MCF 10A (cell line): ENCODE measurements at regions of chr7 and their contacts with region 1.

Region 1: GRCh38 chr7:106285051-106285854 is 470 bp upstream of the NAMPT start:
- DNase-seq: peak; percentile 99
- H3K4me3 Mint-ChIP-seq: peak overlapping the region; percentile 100
- H3K27ac Mint-ChIP-seq: peak overlapping the region; percentile 98
- H3K4me1 Mint-ChIP-seq: peaks cover 17% of the 10 kb centered on the region
- H3K27me3 Mint-ChIP-seq: no peaks in the 10 kb centered on the region
- CTCF ChIP-seq: no peak

Region 2: DNA sequence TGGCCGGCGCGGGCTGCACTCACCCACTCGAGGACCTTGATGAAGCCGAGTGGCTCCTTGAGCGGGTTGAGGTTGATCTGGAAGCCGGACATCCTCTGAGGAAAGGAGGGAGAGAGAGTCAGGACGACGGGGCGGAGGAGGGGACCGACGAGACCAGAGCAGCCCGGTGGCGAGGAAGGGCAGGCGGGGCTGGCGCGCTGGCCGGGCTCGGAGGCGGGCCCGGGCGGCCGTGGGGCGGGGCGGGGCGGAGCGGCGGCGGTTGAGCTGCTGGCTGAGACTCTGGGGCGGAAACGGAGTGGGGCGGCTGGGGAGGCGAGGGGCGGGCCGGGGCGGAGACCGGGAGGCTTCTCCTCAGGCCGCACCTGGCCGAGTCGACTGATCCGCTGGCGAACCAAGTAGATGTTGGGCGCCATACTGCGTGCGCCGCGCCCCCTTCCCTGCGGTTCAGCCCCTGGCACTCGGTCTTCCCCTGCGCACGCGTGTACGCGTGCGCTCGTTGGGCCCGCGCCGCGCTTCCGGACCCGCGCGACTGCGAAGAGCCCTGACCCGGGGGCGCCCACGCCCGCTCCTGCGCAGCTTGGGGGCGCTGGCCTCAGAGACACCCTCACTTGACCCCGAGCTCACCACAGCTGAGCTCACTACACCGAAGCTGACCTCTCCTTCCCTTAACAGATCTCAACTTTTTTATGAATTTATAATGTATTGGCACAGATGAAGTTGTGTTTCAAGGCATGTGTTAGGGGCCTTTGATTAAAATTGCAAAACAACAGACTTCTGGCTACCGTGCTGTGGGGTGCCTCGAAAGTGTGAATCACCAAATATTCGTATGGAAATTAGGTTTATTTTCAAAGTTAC is 172.9 kb before region 1 on chr7 and contains the start of gene SYPL1:
- CTCF ChIA-PET with region 1: no interaction called
- POLR2A ChIA-PET with region 1: interaction called, 15 read pairs
- intact Hi-C with region 1: no loop called
- DNase-seq: peak; percentile 92
- H3K4me3 Mint-ChIP-seq: peak within 1 kb of the TSS; percentile 88
- H3K27ac Mint-ChIP-seq: peak within 1 kb of the TSS; percentile 95
- H3K4me1 Mint-ChIP-seq: peaks cover 23% of the 10 kb centered on the region
- H3K27me3 Mint-ChIP-seq: no peaks in the 10 kb centered on the region
- CTCF ChIP-seq: no peak
- total RNA-seq, gene SYPL1: 77.6 and 92.1 TPM in 2 replicates

Region 3: DNA sequence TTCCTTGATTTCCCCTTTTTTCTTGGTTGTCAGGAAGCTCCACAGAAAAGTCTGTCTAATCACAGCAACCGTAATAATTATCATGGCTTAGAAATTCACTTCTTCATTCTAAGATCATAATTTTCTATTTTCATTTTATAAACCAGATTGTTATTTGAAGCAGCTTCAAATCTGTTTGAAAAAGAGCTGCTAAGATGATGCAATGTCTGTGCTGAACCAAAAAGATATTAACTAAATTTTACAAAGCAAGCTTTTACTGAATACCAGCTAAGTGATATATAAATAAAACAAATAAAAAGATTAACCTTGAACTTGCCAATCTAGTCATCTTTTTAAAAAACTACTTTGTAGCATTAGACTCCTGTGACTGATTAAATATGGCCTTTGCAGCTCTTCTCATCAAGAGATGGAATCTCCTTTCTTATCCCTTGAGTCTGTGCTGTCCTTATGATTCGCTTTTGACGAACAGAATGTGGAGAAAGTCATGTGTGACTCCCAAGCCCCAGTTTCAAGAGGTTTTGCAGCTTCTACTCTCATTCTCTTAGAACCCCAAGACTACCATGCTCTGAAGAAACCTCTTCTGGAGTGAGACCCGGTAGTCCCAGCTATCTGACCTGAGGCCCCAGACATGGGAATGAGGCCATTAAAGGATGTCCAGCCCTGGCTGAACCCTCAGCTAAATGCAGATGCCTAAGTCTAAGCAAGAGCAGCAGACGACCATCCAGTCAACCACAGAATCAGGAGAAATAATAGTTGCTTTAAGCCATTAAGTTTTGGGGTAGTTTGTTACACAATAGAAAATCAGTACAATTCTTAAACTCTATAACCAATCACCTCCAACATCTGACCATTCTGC is 14.9 kb before region 1 on chr7:
- CTCF ChIA-PET with region 1: interaction called, 3 read pairs
- POLR2A ChIA-PET with region 1: interaction called, 20 read pairs
- intact Hi-C with region 1: no loop called
- DNase-seq: no peak
- H3K4me3 Mint-ChIP-seq: no peak overlapping the region
- H3K27ac Mint-ChIP-seq: peak overlapping the region; percentile 74
- H3K4me1 Mint-ChIP-seq: peaks cover 12% of the 10 kb centered on the region
- H3K27me3 Mint-ChIP-seq: no peaks in the 10 kb centered on the region
- CTCF ChIP-seq: no peak

Region 4: DNA sequence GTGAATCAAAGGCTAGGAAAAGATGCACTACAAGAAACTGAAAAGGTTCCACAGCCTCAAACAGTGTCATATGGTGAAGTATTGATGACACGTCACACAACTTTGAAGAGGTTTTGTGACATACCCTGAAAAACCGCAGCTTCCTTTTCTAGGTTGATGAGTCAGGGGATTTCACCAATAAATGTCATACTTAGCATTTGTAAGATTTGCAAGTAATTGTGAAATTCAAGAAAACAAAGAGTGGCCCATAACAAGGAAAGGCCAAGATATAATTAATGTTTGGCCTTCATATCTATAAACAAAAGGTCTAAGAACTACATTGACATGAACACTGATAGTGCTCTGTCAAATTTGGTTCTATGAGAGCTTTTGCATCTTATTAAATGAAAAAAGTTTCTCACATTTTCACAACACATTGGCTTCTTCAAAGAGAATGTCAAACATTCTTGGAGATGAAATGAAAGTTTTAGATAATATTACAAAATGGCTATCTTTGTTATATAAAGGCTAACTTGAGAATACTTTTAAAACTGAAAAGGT is 61.5 kb after region 1 on chr7:
- CTCF ChIA-PET with region 1: no interaction called
- POLR2A ChIA-PET with region 1: interaction called, 31 read pairs
- intact Hi-C with region 1: loop called (anchors 2 kb)
- DNase-seq: peak; percentile 94
- H3K4me3 Mint-ChIP-seq: peak overlapping the region; percentile 6
- H3K27ac Mint-ChIP-seq: peak overlapping the region; percentile 75
- H3K4me1 Mint-ChIP-seq: peaks cover 19% of the 10 kb centered on the region
- H3K27me3 Mint-ChIP-seq: no peaks in the 10 kb centered on the region
- CTCF ChIP-seq: no peak

Region 5: DNA sequence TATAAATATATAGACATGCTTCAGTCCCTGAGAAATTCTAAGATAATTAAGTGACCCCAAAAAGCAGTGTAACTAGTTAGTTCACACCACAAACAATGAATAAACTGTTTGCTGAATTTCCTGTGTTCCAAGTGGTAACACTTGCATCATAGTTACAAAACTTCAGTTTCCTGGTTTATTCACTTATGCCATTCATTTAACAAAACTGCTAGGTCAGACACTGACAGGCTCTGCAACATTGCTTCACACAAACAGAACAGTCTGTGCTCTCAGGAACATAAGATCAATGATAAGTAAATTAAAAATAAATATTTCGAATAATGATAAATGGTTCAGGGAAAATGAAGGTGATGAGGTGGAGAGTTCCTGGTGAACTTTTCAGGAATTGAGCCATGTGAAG is 132.8 kb after region 1 on chr7:
- CTCF ChIA-PET with region 1: interaction called, 4 read pairs
- POLR2A ChIA-PET with region 1: interaction called, 94 read pairs
- intact Hi-C with region 1: loop called (anchors 2 kb)
- DNase-seq: peak; percentile 77
- H3K4me3 Mint-ChIP-seq: no peak overlapping the region
- H3K27ac Mint-ChIP-seq: peak overlapping the region; percentile 89
- H3K4me1 Mint-ChIP-seq: peaks cover 43% of the 10 kb centered on the region
- H3K27me3 Mint-ChIP-seq: no peaks in the 10 kb centered on the region
- CTCF ChIP-seq: no peak

Region 6: GRCh38 chr7:106433377-106433776 is 148.1 kb after region 1 on chr7:
- CTCF ChIA-PET with region 1: no interaction called
- POLR2A ChIA-PET with region 1: no interaction called
- intact Hi-C with region 1: no loop called
- DNase-seq: no peak
- H3K4me3 Mint-ChIP-seq: no peak overlapping the region
- H3K27ac Mint-ChIP-seq: no peak overlapping the region
- H3K4me1 Mint-ChIP-seq: no peaks in the 10 kb centered on the region
- H3K27me3 Mint-ChIP-seq: no peaks in the 10 kb centered on the region
- CTCF ChIP-seq: no peak

Region 7: DNA sequence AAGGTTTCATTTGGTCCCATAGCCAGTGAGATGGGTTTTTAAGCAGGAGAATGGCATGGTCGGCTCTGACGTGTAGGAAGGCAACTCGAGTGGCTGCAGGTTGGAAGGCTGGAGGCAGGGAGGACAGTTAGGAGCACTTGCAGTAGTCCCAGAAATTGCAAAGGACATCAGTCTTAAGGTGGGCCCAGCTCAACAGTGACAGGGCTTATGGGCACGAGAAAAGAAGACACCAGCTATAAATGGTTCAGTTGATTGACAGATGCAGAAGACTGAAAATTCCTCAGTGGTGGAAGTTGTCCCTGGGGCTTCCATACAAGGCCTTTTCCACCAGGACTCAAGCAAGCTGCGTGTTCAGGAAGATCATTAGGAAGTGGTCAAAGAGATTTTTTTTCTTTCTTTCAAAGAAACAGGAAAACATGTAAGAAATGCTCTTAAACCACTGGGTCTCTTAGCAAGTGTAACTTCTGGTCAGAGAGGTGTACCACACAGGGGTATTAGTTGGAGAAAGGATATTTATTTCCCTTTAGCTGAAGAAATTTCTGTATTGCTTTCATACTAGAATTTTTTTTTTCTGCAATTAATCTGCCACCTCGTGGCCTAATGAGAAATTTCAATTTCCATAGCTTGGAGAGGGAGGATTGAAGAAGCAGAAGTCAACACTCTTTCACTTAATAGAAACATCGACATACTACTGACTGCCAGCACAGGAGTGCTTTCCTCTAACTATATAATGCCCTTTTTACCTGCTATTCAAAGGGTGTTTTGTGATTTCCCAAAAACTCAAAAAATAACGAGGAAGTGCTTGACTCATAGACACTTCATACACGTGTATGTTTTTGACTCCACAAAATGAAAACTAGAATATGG is 177.0 kb after region 1 on chr7:
- CTCF ChIA-PET with region 1: interaction called, 13 read pairs
- POLR2A ChIA-PET with region 1: interaction called, 23 read pairs
- intact Hi-C with region 1: loop called (anchors 1 kb)
- DNase-seq: peak; percentile 61
- H3K4me3 Mint-ChIP-seq: no peak overlapping the region
- H3K27ac Mint-ChIP-seq: no peak overlapping the region
- H3K4me1 Mint-ChIP-seq: no peaks in the 10 kb centered on the region
- H3K27me3 Mint-ChIP-seq: no peaks in the 10 kb centered on the region
- CTCF ChIP-seq: peak; percentile 55